ENCODE measurements at regions of chr7 and their contacts with region 1.

Region 1: GRCh38 chr7:149147072-149147751 is at the start of gene ZNF398:
- DNase-seq: peak; percentile 53 to 78
- H3K4me3 ChIP-seq: peak within 1 kb of the TSS; percentile 98
- H3K27ac ChIP-seq: peak within 1 kb of the TSS; percentile 95
- H3K4me1 ChIP-seq: peaks cover 51% of the 10 kb centered on the region
- H3K27me3 ChIP-seq: no peaks in the 10 kb centered on the region
- CTCF ChIP-seq: peak; percentile 76
- total RNA-seq, gene ZNF398: 10.8 and 11.7 TPM in 2 replicates

Region 2: DNA sequence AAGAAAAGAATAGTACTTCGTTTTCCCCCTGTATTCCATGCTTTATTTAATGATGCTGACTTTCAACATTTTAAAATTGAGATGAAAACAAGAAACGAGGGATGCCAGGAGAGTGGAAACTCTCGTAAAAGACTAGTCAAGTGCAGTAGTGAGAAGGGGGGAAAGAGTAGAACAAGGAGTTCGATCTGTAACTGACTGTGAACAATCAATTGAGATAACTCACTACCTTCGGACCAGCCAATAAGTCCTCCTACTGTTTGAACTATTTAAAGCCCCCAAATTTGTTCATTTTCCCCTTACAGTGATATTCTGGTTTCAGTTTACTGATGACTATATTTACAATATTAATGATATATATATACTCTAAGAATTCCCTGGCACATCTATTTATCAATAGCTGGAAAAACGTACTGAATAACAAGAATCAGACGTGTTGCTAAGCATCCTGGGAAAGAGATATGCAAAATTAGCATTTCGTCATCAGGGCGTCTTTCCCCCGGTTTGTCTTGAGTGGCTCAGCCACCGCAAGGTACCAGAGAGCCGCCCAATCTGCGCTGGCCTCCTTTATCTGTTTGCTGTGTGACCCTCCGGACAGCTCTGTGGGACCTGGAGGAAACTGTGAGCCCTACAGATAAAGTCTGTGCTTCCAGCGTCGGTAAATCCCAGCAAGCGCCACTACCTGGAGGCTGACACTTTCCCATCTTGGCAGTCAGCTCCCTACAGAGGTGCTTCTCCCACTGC is 160.0 kb before region 1 on chr7:
- CTCF ChIA-PET with region 1: no interaction called
- POLR2A ChIA-PET with region 1: no interaction called
- intact Hi-C with region 1: loop called (anchors 5 kb)
- DNase-seq: peak; percentile 86 to 91
- H3K4me3 ChIP-seq: peak overlapping the region; percentile 88
- H3K27ac ChIP-seq: peak overlapping the region; percentile 78
- H3K4me1 ChIP-seq: peaks cover 46% of the 10 kb centered on the region
- H3K27me3 ChIP-seq: no peaks in the 10 kb centered on the region
- CTCF ChIP-seq: no peak

Region 3: DNA sequence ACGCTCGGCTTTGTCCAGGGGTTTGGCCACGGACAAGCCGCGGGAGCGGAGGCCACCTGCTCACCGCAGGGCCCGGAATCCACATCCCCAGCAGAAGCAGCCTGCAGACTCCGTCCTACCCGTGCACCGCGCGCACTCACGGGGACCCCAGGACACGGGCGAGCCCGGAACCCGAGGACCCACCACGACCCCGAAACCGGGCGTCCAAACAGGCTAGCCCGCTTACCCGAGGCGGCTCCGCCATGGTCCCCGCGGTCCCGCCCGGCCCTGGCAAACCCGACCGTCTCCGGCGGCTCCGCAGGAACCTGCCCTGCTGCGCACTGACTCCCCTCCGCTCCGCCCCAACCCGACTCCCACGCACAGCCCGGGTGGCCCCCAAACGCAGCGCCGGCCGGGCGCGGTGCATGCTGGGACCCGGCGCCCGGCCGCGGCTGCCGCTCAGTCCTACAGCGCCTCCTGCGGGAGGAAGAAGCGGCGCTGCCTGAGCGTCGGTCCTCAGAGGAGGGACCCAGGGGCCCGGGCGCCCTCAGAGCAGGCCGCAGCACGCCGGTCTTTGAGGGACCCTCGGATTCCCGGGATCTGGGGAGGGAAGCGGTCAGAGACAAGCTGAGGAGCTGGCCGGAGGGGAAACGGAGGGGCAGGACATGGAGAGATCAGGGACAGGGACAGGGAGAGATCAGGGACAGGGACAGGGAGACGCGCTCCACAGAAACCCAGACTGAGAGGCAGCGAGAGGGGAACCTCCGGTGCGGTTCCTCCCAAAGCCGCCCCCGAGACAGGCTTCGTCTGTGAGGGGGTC is 56.6 kb before region 1 on chr7 and contains the start of gene ZNF786:
- CTCF ChIA-PET with region 1: no interaction called
- POLR2A ChIA-PET with region 1: no interaction called
- intact Hi-C with region 1: loop called (anchors 1 kb)
- DNase-seq: peak; percentile 71 to 87
- H3K4me3 ChIP-seq: peak within 1 kb of the TSS; percentile 96
- H3K27ac ChIP-seq: peak within 1 kb of the TSS; percentile 85
- H3K4me1 ChIP-seq: no peaks in the 10 kb centered on the region; the same call in 1 of the 2 replicates
- H3K27me3 ChIP-seq: no peaks in the 10 kb centered on the region
- CTCF ChIP-seq: peak; percentile 92
- total RNA-seq, gene ZNF786: 7.0 and 8.4 TPM in 2 replicates

Region 4: GRCh38 chr7:149195180-149196150 is 48.3 kb after region 1 on chr7 and contains the start of gene ZNF282:
- CTCF ChIA-PET with region 1: no interaction called
- POLR2A ChIA-PET with region 1: interaction called, 3 read pairs
- intact Hi-C with region 1: loop called (anchors 5 kb)
- DNase-seq: peak; percentile 90 to 94
- H3K4me3 ChIP-seq: peak within 1 kb of the TSS; percentile 91
- H3K27ac ChIP-seq: peak within 1 kb of the TSS; percentile 75
- H3K4me1 ChIP-seq: peaks cover 17% of the 10 kb centered on the region
- H3K27me3 ChIP-seq: no peaks in the 10 kb centered on the region
- CTCF ChIP-seq: peak; percentile 69
- total RNA-seq, gene ZNF282: 32.5 and 35.9 TPM in 2 replicates

Region 5: DNA sequence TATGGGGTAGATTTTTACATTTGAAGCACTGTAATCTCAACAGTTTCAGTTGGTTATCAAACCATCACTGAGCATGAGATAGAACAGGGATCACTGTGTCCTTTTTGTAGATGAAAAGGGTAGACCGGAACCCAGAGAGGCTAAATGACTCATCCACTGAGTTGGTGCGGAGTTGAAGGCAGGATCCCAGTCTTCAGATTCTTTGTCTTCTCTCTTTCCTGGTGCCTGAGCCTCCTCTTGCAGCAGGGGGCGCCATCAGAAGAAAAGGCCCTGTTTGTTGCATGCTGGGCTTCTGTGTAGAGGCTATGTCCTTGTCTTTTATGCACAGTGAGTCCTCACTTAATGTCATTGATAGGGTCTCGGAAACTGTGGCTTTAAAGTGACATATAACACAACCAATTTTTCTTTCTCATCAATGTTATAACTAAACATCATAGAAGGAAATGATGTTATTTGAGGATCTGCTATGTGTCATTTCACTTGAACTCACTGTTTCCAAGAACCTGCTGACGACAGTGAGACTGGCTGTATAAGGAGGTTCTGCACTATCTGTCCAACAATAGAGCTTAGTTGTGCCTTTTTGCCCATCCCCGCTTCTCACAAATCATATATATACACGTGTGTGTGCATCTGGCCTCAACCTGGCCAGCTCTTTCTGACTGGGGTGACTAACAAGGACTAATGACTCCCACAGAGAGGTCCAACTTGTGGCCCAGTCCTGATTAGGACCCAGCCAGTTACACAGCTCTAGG is 62.5 kb after region 1 on chr7:
- CTCF ChIA-PET with region 1: no interaction called
- POLR2A ChIA-PET with region 1: no interaction called
- intact Hi-C with region 1: no loop called
- DNase-seq: peak in 1 of 2 experiments; percentile 66
- H3K4me3 ChIP-seq: no peak overlapping the region
- H3K27ac ChIP-seq: no peak overlapping the region
- H3K4me1 ChIP-seq: peaks cover 21% of the 10 kb centered on the region
- H3K27me3 ChIP-seq: no peaks in the 10 kb centered on the region
- CTCF ChIP-seq: peak; percentile 87

Region 6: GRCh38 chr7:149239345-149240191 is 92.4 kb after region 1 on chr7 and contains the start of gene ZNF212:
- CTCF ChIA-PET with region 1: no interaction called
- POLR2A ChIA-PET with region 1: no interaction called
- intact Hi-C with region 1: loop called (anchors 1 kb)
- DNase-seq: peak; percentile 89 to 97
- H3K4me3 ChIP-seq: peak within 1 kb of the TSS; percentile 95
- H3K27ac ChIP-seq: peak within 1 kb of the TSS; percentile 82
- H3K4me1 ChIP-seq: peaks cover 45% of the 10 kb centered on the region
- H3K27me3 ChIP-seq: no peaks in the 10 kb centered on the region
- CTCF ChIP-seq: peak; percentile 79
- total RNA-seq, gene ZNF212: 16.9 and 22.3 TPM in 2 replicates

Measured in PC-9 (cell line).